ENCODE measurements at regions of chr12 and their contacts with region 1.

Region 1: DNA sequence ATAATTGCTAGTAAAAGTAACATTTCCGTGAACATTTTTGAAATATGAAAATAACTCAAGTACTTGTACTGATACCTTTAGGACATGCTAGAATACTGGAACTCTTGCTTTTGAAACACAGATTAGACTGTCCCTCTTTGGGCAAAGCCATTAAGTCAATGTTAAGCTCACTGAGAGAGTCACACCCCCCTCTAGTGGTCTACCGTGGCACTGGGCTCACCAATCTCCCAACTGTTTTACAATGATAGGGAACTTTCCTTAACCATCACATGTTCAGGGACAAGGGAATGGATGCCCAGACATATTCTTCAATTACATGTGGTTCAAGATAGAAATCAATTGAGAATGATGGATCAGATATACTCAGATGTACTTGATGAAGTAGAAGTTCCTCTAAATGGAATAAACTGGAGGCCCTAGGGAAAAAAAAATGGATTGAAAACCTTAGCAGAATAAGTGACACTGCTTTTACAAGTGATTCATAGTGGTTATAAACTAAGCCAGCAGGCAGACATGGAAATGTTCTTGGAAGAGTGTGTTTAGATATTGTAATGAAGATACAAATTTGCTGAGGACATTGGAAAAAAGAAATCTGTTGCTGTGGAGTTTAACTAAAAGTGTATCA is 17.8 kb downstream of the NANOG start:
- DNase-seq: peak; percentile 27 to 43 (median 39)
- H3K4me3 ChIP-seq: no peak overlapping the region
- H3K4me3 Mint-ChIP-seq: no peak overlapping the region
- H3K27ac ChIP-seq: no peak overlapping the region
- H3K27ac Mint-ChIP-seq: no peak overlapping the region
- H3K4me1 ChIP-seq: no peaks in the 10 kb centered on the region
- H3K4me1 Mint-ChIP-seq: no peaks in the 10 kb centered on the region
- H3K27me3 ChIP-seq: no peaks in the 10 kb centered on the region
- H3K27me3 Mint-ChIP-seq: peaks cover 1 to 3% of the 10 kb centered on the region in 2 donors

Region 2: DNA sequence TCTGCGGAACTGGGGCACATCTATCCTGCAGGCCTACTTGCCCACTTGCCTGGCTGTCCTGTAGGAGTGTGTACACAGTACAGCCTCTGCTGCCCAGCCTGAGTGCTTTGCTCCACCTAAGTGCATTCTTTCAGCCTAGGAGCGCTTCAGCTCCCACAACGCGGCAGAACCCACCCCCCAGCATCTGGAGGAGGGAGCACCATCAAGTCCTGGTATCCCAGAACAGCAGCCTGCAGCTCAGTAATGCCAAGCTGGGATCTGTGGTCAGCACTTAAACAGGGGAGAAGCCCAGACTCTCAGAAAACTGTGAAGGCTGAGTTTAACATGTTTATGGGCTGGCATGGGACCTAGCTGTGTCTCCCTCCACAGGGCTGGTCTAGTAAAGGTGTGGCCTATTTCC is 223.4 kb before region 1 on chr12:
- CTCF ChIA-PET with region 1: interaction called, 6 read pairs
- POLR2A ChIA-PET with region 1: no interaction called
- intact Hi-C with region 1: loop called (anchors 2 kb)
- DNase-seq: no peak
- H3K4me3 ChIP-seq: no peak overlapping the region
- H3K4me3 Mint-ChIP-seq: no peak overlapping the region
- H3K27ac ChIP-seq: no peak overlapping the region
- H3K27ac Mint-ChIP-seq: no peak overlapping the region
- H3K4me1 ChIP-seq: no peaks in the 10 kb centered on the region
- H3K4me1 Mint-ChIP-seq: peaks cover 0 to 2% (median under 1%) of the 10 kb centered on the region in 4 donors
- H3K27me3 ChIP-seq: no peaks in the 10 kb centered on the region
- H3K27me3 Mint-ChIP-seq: peaks cover 18 to 23% of the 10 kb centered on the region in 2 donors

Region 3: DNA sequence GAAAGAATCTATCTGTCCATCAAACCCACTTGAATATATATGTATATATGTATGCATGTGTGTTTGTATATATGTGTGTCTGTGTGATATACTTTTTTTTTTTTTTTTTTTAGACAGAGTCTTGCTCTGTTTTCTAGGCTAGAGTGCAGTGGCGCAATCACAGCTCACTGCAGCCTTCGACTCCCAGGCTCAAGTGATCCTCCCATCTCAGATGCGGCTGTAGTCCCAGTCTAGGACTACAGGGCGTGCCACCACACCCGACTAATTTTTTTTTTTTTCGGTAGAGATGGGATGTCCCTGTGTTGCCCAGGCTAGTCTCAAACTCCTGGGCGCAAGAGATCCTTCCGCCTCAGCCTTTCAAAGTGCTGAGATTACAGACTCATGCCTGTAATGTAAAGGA is 128.2 kb before region 1 on chr12:
- CTCF ChIA-PET with region 1: interaction called, 9 read pairs
- POLR2A ChIA-PET with region 1: no interaction called
- intact Hi-C with region 1: loop called (anchors 1 kb)
- DNase-seq: no peak
- H3K4me3 ChIP-seq: no peak overlapping the region
- H3K4me3 Mint-ChIP-seq: no peak overlapping the region
- H3K27ac ChIP-seq: no peak overlapping the region
- H3K27ac Mint-ChIP-seq: no peak overlapping the region
- H3K4me1 ChIP-seq: no peaks in the 10 kb centered on the region
- H3K4me1 Mint-ChIP-seq: peaks cover 3 to 11% (median 5%) of the 10 kb centered on the region in 4 donors
- H3K27me3 ChIP-seq: no peaks in the 10 kb centered on the region
- H3K27me3 Mint-ChIP-seq: peaks cover 9 to 10% of the 10 kb centered on the region in 2 donors